ENCODE measurements at regions of chr7 and their contacts with region 1.

Region 1: DNA sequence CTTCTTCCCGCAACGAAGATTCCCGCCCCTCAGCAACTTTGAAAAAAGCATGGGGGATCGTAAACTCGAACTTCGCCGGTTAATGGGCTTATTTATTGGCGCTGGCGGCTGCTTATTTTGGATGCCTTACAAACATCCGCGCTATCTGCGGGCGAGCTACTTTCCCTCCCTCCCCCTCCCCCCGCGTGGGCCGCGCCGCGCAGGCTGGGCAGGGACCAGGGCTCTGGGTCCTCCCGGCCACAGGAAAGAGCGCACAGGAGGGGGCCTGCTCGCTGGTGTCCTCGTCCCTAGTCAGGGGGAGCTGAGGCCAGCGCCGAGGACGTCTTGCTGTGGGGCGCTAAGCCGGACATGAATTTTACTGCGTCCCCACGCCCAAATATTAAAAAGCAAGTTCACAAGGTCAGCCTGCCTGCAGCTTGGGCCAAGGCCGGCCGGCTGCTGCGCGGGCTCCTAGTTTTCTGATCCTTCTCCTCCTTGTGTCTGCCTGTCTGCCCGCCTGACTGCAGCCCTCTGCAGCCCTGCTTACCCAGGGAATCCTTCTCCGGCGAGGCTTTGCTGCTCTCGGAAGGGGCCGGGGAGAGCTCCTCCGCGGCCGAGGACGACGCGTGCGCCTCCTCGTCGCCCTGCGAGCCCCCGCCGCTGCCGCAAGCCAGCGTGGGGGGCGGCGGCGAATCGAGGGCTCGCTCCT is 1.2 kb downstream of the HOXA10 start:
- DNase-seq: no peak
- ATAC-seq: no peak
- H3K4me3 ChIP-seq: peak overlapping the region in 3 of 5 experiments; percentile 36 to 55 (median 51)
- H3K4me3 Mint-ChIP-seq: peak overlapping the region; percentile 54
- H3K27ac ChIP-seq: no peak overlapping the region
- H3K27ac Mint-ChIP-seq: no peak overlapping the region
- H3K4me1 ChIP-seq: peaks cover 38 to 63% of the 10 kb centered on the region in 2 donors
- H3K4me1 Mint-ChIP-seq: peaks cover 19% of the 10 kb centered on the region
- H3K27me3 ChIP-seq: peaks cover 0 to 96% (median 81%) of the 10 kb centered on the region in 4 experiments
- H3K27me3 Mint-ChIP-seq: peaks cover 55% of the 10 kb centered on the region
- CTCF ChIP-seq: no peak

Region 2: GRCh38 chr7:27129729-27130539 is 43.0 kb before region 1 on chr7:
- CTCF ChIA-PET with region 1: no interaction called
- POLR2A ChIA-PET with region 1: no interaction called
- intact Hi-C with region 1: no loop called
- DNase-seq: no peak
- ATAC-seq: peak; percentile 37
- H3K4me3 ChIP-seq: peak overlapping the region in 3 of 5 experiments; percentile 58 to 72 (median 67)
- H3K4me3 Mint-ChIP-seq: peak overlapping the region; percentile 34
- H3K27ac ChIP-seq: no peak overlapping the region
- H3K27ac Mint-ChIP-seq: no peak overlapping the region
- H3K4me1 ChIP-seq: no peaks in the 10 kb centered on the region
- H3K4me1 Mint-ChIP-seq: no peaks in the 10 kb centered on the region
- H3K27me3 ChIP-seq: peaks cover 0 to 16% (median 5%) of the 10 kb centered on the region in 4 experiments
- H3K27me3 Mint-ChIP-seq: peaks cover 65% of the 10 kb centered on the region
- CTCF ChIP-seq: no peak

Region 3: DNA sequence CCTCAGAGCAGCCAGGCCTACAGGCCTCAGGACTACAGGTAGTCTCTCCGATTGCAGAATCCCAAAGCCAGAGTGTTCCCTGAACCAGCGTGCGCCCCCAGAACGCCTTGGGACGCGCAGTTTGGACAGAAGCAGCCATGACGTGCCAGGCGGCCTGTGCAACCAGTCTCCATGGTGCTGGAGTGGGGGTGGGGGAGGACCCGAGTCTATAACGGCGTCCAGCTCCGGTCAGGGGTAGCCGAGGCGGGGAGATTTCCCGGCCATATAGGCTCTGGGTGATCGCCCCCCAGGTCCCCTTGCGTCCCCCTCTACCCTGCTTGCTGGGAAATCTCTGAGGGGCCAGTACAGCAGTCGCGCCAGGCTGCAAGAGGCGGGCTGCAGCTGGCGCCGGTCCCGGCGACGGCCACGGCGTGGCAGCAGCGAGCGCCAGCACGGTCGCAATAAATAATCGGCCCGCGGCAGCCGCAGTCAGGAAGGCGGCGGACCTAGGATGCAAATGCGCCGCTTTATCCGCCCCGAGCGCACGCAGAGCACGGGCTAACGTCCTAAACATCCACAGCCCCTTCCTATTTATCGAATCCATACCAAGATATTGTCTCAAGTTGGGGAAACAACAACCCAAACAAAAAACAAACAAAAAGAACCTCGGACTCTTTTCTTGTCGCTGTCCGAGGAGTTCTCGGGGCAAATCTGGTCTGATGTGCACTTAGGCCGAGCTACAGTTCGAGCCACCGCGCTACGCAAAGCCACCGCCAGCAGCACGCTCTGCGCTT is 22.2 kb before region 1 on chr7:
- CTCF ChIA-PET with region 1: interaction called, 10 read pairs
- POLR2A ChIA-PET with region 1: interaction called, 3 read pairs
- intact Hi-C with region 1: no loop called
- DNase-seq: peak; percentile 86
- ATAC-seq: peak; percentile 86
- H3K4me3 ChIP-seq: peak overlapping the region; percentile 26 to 48 (median 34)
- H3K4me3 Mint-ChIP-seq: peak overlapping the region; percentile 83
- H3K27ac ChIP-seq: no peak overlapping the region
- H3K27ac Mint-ChIP-seq: peak overlapping the region; percentile 73
- H3K4me1 ChIP-seq: peaks cover 62 to 71% of the 10 kb centered on the region in 2 donors
- H3K4me1 Mint-ChIP-seq: peaks cover 43% of the 10 kb centered on the region
- H3K27me3 ChIP-seq: peaks cover 0 to 99% (median 85%) of the 10 kb centered on the region in 4 experiments
- H3K27me3 Mint-ChIP-seq: peaks cover 74% of the 10 kb centered on the region
- CTCF ChIP-seq: peak; percentile 88